ENCODE measurements at regions of chr20 and their contacts with region 1.

Region 1: DNA sequence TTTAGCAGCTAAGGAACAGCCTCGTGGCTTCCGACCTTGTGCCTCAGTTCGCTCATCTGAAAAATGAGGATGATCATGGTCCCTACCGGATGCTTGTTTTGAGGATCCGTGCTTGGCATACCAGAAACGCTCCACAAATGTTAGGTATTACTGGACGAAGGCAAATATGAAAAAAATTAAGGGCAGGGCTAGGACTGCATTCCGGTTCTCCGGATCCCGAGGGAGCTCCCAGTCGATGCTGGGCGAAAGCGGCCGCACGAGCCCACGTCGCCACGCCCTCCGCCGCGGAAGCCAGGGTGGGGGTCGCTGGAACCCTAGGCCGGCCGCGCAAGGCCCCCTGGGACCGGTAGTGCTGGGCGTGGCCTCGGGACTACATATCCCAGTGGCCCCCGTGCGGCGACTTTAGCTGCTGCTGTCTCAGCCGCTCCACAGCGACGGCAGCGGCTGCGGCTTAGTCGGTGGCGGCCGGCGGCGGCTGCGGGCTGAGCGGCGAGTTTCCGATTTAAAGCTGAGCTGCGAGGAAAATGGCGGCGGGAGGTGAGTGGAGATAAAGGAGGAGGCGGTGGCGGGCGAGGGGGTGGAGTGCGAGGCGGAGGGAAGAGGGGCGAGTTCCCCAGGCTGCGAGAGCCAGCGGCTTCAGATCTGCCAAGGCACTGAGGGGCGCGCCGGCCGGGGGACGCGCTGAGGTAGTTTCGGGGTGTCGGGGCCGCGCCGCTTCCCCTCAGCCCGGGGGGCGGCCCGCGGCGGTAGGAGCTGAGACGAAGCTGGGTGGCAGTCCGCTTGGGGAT is at the start of gene NCOA3:
- DNase-seq: peak; percentile 97 to 99 (median 98)
- ATAC-seq: peak; percentile 99
- H3K4me3 ChIP-seq: peak within 1 kb of the TSS; percentile 96
- H3K27ac ChIP-seq: peak within 1 kb of the TSS; percentile 91
- H3K4me1 ChIP-seq: peaks cover 3% of the 10 kb centered on the region
- H3K27me3 ChIP-seq: no peaks in the 10 kb centered on the region
- total RNA-seq, gene NCOA3: 21.0 to 27.2 (median 22.6) TPM

Region 2: GRCh38 chr20:47411161-47411560 is 90.5 kb before region 1 on chr20:
- intact Hi-C with region 1: loop called in 1 of 4 experiments (anchors 10 kb)
- DNase-seq: peak in 1 of 3 donors; percentile 3
- ATAC-seq: peak; percentile 64 to 70
- H3K4me3 ChIP-seq: no peak overlapping the region
- H3K27ac ChIP-seq: peak overlapping the region; percentile 17
- H3K4me1 ChIP-seq: no peaks in the 10 kb centered on the region
- H3K27me3 ChIP-seq: no peaks in the 10 kb centered on the region

Region 3: GRCh38 chr20:47568001-47568407 is 66.3 kb after region 1 on chr20:
- intact Hi-C with region 1: loop called in 2 of 4 experiments (anchors 10 kb)
- DNase-seq: no peak
- ATAC-seq: peak; percentile 62 to 66
- H3K4me3 ChIP-seq: no peak overlapping the region
- H3K27ac ChIP-seq: peak overlapping the region; percentile 5
- H3K4me1 ChIP-seq: peaks cover 12% of the 10 kb centered on the region
- H3K27me3 ChIP-seq: no peaks in the 10 kb centered on the region

Region 4: GRCh38 chr20:47576516-47577033 is 74.9 kb after region 1 on chr20:
- intact Hi-C with region 1: loop called in 1 of 4 experiments (anchors 10 kb)
- DNase-seq: peak; percentile 52 to 76 (median 74)
- ATAC-seq: peak; percentile 96 to 97
- H3K4me3 ChIP-seq: peak overlapping the region; percentile 35
- H3K27ac ChIP-seq: peak overlapping the region; percentile 87
- H3K4me1 ChIP-seq: peaks cover 6% of the 10 kb centered on the region
- H3K27me3 ChIP-seq: no peaks in the 10 kb centered on the region

Region 5: DNA sequence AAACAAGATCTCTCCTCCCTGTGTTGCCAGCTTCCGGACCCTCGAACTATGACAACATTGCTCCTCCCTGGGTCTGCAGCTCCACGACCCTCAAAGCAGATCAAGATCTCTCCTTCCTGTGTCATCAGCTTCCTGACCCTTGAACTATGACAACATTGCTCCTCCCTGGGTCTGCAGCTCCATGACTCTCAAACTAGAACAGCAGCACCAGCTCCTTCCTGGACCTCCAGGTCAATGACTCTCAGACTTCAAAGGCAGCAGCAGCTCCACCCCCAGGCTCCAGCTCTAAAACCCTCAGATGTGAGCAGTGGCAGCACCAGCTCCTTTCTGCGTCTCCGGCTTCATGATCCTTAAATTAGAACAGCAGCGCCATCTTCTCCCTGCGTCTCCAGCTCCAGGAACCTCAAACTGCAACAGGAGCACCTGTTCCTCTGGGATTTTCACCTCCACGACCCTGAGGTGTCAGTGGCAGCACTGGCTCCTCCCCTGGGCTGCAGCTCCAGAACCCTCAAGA is 624.6 kb after region 1 on chr20:
- intact Hi-C with region 1: no loop called
- DNase-seq: no peak
- ATAC-seq: no peak
- H3K4me3 ChIP-seq: no peak overlapping the region
- H3K27ac ChIP-seq: no peak overlapping the region
- H3K4me1 ChIP-seq: no peaks in the 10 kb centered on the region
- H3K27me3 ChIP-seq: no peaks in the 10 kb centered on the region